ENCODE measurements at regions of chr5 and their contacts with region 1.

Region 1: GRCh38 chr5:38961691-38962090 is 112.5 kb downstream of the RICTOR start:
- DNase-seq: no peak
- ATAC-seq: no peak

Region 2: GRCh38 chr5:38878391-38879077 is 83.2 kb before region 1 on chr5:
- intact Hi-C with region 1: loop called (anchors 2 kb)
- DNase-seq: no peak
- ATAC-seq: no peak

Measured in sciatic nerve (tissue), 2 donors.